ENCODE measurements at regions of chr1 and their contacts with region 1.

Region 1: GRCh38 chr1:176691251-176692228 is 228.6 kb downstream of the PAPPA2 start:
- DNase-seq: peak; percentile 49
- H3K4me3 ChIP-seq: no peak overlapping the region
- H3K27ac ChIP-seq: no peak overlapping the region
- H3K4me1 ChIP-seq: peaks cover 1% of the 10 kb centered on the region
- H3K27me3 ChIP-seq: no peaks in the 10 kb centered on the region
- CTCF ChIP-seq: peak; percentile 82 to 85

Region 2: DNA sequence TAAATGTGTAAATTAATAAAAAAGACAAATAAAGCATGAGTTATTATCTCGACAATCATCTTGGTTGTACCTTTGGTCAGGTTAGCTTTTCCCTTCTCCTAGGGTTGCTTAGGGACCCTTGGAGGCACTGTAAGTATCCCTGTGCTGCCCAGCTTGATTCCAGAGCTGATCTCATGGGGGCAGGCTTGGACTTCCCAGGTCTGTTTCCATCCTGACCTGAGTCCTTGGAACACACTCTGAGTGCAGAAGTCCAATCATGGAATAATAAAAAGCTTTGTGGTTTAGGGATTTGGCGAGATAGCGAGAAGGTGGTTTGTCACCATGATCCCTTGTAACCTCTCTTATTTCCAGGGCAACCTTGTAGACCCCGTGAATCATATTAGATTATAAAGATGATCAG is 247.3 kb before region 1 on chr1:
- CTCF ChIA-PET with region 1: no interaction called
- dilution Hi-C with region 1: no loop called
- in situ Hi-C with region 1: no loop called
- intact Hi-C with region 1: loop called (anchors 5 kb)
- DNase-seq: no peak
- H3K4me3 ChIP-seq: no peak overlapping the region
- H3K27ac ChIP-seq: no peak overlapping the region
- H3K4me1 ChIP-seq: peaks cover 11% of the 10 kb centered on the region
- H3K27me3 ChIP-seq: no peaks in the 10 kb centered on the region
- CTCF ChIP-seq: peak; percentile 4 to 51

Region 3: GRCh38 chr1:176717066-176717750 is 25.7 kb after region 1 on chr1:
- CTCF ChIA-PET with region 1: no interaction called
- dilution Hi-C with region 1: no loop called
- in situ Hi-C with region 1: no loop called
- intact Hi-C with region 1: no loop called
- DNase-seq: no peak
- H3K4me3 ChIP-seq: no peak overlapping the region
- H3K27ac ChIP-seq: no peak overlapping the region
- H3K4me1 ChIP-seq: no peaks in the 10 kb centered on the region
- H3K27me3 ChIP-seq: no peaks in the 10 kb centered on the region
- CTCF ChIP-seq: no peak

Region 4: DNA sequence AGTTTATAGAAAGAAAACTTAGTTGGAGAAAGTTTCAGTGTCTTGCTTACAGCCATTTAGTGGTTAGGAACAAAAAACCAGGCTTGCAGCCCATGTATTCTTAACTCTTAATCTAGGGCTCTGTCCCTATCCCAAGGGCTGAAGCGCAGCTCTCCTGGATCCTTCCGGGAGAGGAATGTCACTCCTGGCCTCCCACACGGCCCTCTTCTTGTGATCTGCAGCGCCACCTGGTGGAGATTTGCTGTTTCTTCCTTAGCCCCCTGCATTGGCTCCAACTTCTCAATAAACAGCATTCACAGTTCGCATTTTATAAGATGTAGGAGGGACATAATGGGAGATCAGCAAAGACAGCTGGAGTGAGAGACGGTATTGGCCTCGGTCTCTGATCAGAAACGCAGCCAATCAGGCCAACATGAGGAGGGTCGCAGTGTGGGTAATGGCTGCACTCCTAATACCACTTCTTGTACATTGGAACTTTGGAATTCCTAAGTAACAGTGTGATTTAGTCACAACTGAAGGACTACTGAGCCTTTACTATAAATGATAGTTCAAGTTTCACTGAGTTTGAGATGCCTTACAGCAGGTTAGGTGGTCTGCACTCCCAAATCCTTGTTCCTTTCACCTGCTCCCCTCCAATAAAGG is 189.5 kb after region 1 on chr1:
- CTCF ChIA-PET with region 1: no interaction called
- dilution Hi-C with region 1: no loop called
- in situ Hi-C with region 1: no loop called
- intact Hi-C with region 1: loop called (anchors 1 kb)
- DNase-seq: peak; percentile 50
- H3K4me3 ChIP-seq: no peak overlapping the region
- H3K27ac ChIP-seq: no peak overlapping the region
- H3K4me1 ChIP-seq: peaks cover 11% of the 10 kb centered on the region
- H3K27me3 ChIP-seq: no peaks in the 10 kb centered on the region
- CTCF ChIP-seq: peak; percentile 73 to 90